ENCODE measurements at regions of chr11 and their contacts with region 1.

Region 1: GRCh38 chr11:10307442-10308207 is 2.8 kb downstream of the ADM start:
- DNase-seq: peak; percentile 91
- ATAC-seq: peak; percentile 79
- H3K4me3 ChIP-seq: peak overlapping the region; percentile 66
- H3K27ac ChIP-seq: peak overlapping the region; percentile 69
- H3K4me1 ChIP-seq: peaks cover 63% of the 10 kb centered on the region
- H3K27me3 ChIP-seq: peaks cover 2% of the 10 kb centered on the region
- CTCF ChIP-seq: peak; percentile 98

Region 2: DNA sequence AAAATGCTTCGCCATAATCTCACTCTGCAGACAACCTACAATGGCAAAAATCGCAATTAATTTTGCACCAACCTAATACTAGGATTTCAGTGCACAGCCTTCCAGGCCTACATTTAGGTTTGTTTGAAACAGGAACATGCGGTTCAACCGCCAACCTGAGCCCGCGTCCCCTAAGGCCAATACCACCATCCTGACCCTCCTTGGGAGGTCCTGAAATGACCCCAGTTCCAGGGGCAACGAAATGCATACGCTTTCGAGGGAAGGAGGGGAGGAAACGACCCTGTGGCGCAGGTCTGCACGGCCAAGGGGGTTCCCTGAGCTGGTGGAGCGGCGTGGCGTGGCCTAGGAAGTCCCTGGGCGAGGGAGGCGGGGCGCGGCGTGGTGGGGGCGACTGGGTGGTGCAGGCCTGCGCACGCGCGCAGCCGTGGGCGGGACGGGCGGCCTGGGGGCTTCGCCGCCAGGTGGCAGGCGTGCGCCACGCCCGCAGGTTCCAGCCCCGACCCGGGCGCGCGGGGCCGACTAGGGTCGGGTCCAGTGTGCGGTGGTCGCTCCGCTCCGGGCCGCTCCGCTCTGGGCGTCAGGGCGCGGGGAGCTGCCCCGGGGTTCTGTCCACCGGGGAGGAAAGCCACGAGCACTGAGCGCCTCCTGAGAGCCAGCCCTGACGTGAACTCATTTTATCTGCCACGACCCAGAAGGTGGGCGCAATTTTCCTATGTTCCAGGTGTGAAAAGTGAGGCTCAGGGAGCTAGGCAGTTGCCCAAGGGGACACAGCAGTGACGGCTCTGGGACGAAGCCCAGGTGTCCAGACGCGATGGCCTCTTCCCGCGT is 549.6 kb before region 1 on chr11:
- intact Hi-C with region 1: loop called (anchors 5 kb)
- DNase-seq: peak; percentile 96
- ATAC-seq: peak; percentile 95
- H3K4me3 ChIP-seq: peak overlapping the region; percentile 91
- H3K27ac ChIP-seq: peak overlapping the region; percentile 87
- H3K4me1 ChIP-seq: peaks cover 33% of the 10 kb centered on the region
- H3K27me3 ChIP-seq: no peaks in the 10 kb centered on the region
- CTCF ChIP-seq: peak; percentile 74

Region 3: DNA sequence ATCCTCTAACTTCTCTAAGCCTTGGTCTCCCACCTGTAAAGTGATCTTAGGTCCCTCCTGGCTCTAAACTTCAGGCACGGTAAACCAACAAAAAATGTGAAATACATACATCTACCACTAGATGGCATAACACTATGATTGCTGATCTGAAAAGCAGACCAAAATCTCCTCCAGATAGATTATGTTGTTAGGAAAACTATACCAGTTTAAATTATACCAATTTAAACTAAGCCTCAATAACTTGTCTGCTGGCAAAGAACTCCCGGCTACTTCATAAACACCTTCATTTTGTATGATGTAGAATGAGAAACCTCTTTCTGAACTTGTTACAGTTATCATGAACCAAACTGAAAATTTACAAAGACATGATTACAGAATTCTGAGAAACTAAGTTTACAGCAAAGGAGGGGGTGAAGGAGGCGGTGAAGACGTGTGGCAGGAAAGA is 99.5 kb before region 1 on chr11:
- intact Hi-C with region 1: loop called (anchors 10 kb)
- DNase-seq: no peak
- ATAC-seq: peak; percentile 82
- H3K4me3 ChIP-seq: no peak overlapping the region
- H3K27ac ChIP-seq: no peak overlapping the region
- H3K4me1 ChIP-seq: no peaks in the 10 kb centered on the region
- H3K27me3 ChIP-seq: no peaks in the 10 kb centered on the region
- CTCF ChIP-seq: peak; percentile 74

Measured in upper lobe of right lung (tissue), 1 donor.